Esophagus squamous epithelium (tissue), 5 donors: ENCODE measurements at regions of chr1 and their contacts with region 1.

Region 1: GRCh38 chr1:53277731-53278130 is 39.4 kb upstream of the MAGOH start:
- DNase-seq: no peak
- H3K4me3 ChIP-seq: no peak overlapping the region
- H3K27ac ChIP-seq: no peak overlapping the region
- H3K4me1 ChIP-seq: peaks cover 5 to 29% (median 11%) of the 10 kb centered on the region in 3 donors
- H3K27me3 ChIP-seq: no peaks in the 10 kb centered on the region
- CTCF ChIP-seq: no peak
- POLR2A ChIP-seq: no peak

Region 2: DNA sequence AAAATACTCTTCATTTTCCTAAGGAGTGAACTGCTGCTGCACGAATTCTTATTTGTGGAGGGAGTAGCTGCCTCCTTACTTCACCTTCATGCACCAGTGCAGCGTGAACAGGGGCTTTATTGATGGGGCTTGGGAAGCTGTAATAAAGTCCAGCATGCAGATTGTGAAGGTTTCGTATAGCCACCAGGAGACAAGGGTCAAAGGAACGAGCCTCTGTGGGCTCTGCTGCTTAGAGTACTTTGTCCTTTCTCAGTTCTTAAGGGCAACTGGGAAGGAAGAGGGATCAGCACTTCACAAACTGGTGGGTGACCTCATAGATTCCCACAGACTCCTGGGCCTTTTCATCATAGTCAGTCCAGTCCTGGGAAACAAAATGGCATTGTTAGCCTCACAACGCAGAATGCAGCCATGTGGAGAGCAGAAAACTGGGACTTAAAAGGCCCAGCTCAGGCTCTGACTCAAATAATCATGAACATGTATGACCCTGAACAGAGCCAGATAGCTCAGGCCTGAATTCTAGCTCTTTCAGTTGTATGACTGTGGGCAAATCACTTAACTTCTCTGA is 63.3 kb before region 1 on chr1:
- intact Hi-C with region 1: no loop called
- DNase-seq: no peak
- H3K4me3 ChIP-seq: no peak overlapping the region
- H3K27ac ChIP-seq: no peak overlapping the region
- H3K4me1 ChIP-seq: peaks cover 0 to 6% (median 6%) of the 10 kb centered on the region in 3 donors
- H3K27me3 ChIP-seq: no peaks in the 10 kb centered on the region
- CTCF ChIP-seq: no peak
- POLR2A ChIP-seq: no peak

Region 3: GRCh38 chr1:53315456-53316423 is 38.0 kb after region 1 on chr1:
- intact Hi-C with region 1: no loop called
- DNase-seq: no peak
- H3K4me3 ChIP-seq: no peak overlapping the region
- H3K27ac ChIP-seq: no peak overlapping the region
- H3K4me1 ChIP-seq: peaks cover 0 to 14% (median 0%) of the 10 kb centered on the region in 3 donors
- H3K27me3 ChIP-seq: no peaks in the 10 kb centered on the region
- CTCF ChIP-seq: no peak
- POLR2A ChIP-seq: no peak

Region 4: GRCh38 chr1:53367503-53368304 is 90.0 kb after region 1 on chr1:
- intact Hi-C with region 1: no loop called
- DNase-seq: no peak
- H3K4me3 ChIP-seq: peak overlapping the region in 1 of 4 donors; percentile 16
- H3K27ac ChIP-seq: no peak overlapping the region
- H3K4me1 ChIP-seq: peaks cover 0 to 4% (median 0%) of the 10 kb centered on the region in 3 donors
- H3K27me3 ChIP-seq: peaks cover 0 to 17% (median 0%) of the 10 kb centered on the region in 4 donors
- CTCF ChIP-seq: no peak
- POLR2A ChIP-seq: no peak

Region 5: DNA sequence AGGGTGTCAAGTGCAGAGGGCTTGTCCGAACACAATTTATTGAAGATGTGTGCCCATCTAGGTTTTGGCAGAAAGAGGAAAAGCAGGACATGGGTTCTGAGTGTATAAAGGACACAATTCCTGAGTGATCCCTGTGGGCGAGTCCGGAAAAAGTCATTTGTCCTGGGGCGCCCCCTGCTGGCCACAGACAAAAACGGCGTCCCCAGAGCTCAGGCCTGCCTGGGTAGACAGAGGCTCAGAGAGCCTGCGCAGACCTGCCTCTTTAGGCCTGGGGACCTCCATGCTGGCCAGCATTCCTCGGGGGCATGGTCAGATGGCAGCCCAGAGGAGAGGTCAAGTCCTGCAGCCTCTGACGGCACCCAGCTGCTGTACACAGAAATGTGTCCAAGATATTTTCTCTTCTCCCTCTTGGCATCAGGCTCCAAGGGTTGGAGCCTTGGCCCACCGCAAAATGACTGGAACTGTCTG is 115.6 kb after region 1 on chr1:
- intact Hi-C with region 1: loop called (anchors 2 kb)
- DNase-seq: no peak
- H3K4me3 ChIP-seq: no peak overlapping the region
- H3K27ac ChIP-seq: no peak overlapping the region
- H3K4me1 ChIP-seq: no peaks in the 10 kb centered on the region
- H3K27me3 ChIP-seq: peaks cover 0 to 30% (median 0%) of the 10 kb centered on the region in 4 donors
- CTCF ChIP-seq: peak; percentile 87 to 96 (median 94)
- POLR2A ChIP-seq: no peak